ENCODE measurements at regions of chr12 and their contacts with region 1.

Region 1: DNA sequence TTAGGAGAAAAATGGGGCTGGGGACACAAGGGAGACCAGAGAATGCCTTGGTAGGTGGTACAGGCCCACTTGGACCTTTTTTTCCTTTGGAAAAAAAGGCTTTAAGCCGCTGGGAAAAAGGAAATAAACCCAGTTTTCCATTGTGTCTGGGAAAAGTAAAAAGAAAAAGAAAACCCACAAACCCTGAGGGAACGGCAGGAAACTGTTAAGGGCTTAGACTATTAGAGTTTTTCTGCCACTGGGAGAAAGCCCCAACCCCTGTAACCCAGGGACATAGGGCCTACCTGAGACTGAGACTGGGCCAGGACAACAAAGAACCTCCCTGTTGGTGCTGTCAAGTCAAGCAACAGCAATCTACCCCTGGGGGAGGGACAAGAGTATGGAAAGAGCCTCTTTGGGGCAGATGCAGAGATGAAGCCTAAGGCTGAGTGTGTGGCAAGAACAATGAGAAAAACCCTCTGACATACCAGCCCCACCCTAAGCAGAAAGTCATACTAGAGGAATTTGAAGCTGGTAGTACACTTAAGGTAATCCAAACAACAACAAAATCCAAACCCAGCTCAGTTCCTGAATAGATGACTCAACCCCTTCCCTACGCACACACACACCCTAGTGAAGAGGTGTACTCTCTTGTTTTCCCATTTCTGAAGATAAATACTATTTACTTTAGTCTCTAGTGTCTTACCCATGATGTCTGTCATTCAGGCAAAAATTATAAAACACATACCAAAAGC is 22.8 kb downstream of the ATF1 start:
- DNase-seq: peak; percentile 94
- ATAC-seq: peak; percentile 92
- H3K4me3 ChIP-seq: peak overlapping the region; percentile 15 to 54
- H3K27ac ChIP-seq: peak overlapping the region; percentile 87
- H3K4me1 ChIP-seq: peaks cover 61 to 74% of the 10 kb centered on the region in 2 experiments
- H3K27me3 ChIP-seq: no peaks in the 10 kb centered on the region
- CTCF ChIP-seq: no peak
- POLR2A ChIP-seq: no peak
- RAD21 ChIP-seq: no peak; the same call in 1 of the 2 replicates

Region 2: GRCh38 chr12:50775251-50775650 is 11.4 kb before region 1 on chr12:
- CTCF ChIA-PET with region 1: no interaction called
- POLR2A ChIA-PET with region 1: interaction called, 13 read pairs
- RAD21 ChIA-PET with region 1: interaction called, 3 read pairs
- intact Hi-C with region 1: no loop called
- DNase-seq: no peak
- ATAC-seq: no peak
- H3K4me3 ChIP-seq: no peak overlapping the region
- H3K27ac ChIP-seq: peak overlapping the region; percentile 89
- H3K4me1 ChIP-seq: peaks cover 35 to 42% of the 10 kb centered on the region in 2 experiments
- H3K27me3 ChIP-seq: no peaks in the 10 kb centered on the region
- CTCF ChIP-seq: no peak
- POLR2A ChIP-seq: no peak
- RAD21 ChIP-seq: no peak

Region 3: GRCh38 chr12:51147309-51147708 is 360.6 kb after region 1 on chr12:
- CTCF ChIA-PET with region 1: no interaction called
- POLR2A ChIA-PET with region 1: no interaction called
- RAD21 ChIA-PET with region 1: no interaction called
- intact Hi-C with region 1: no loop called
- DNase-seq: no peak
- ATAC-seq: no peak
- H3K4me3 ChIP-seq: no peak overlapping the region
- H3K27ac ChIP-seq: no peak overlapping the region
- H3K4me1 ChIP-seq: no peaks in the 10 kb centered on the region
- H3K27me3 ChIP-seq: no peaks in the 10 kb centered on the region
- CTCF ChIP-seq: no peak
- POLR2A ChIP-seq: no peak
- RAD21 ChIP-seq: no peak

Measured in HCT116 (cell line).